Heart right ventricle (tissue), 16 donors: ENCODE measurements at regions of chr10 and their contacts with region 1.

Region 1: GRCh38 chr10:57917019-57917418 is 350.7 kb downstream of the IPMK start:
- DNase-seq: no peak
- ATAC-seq: no peak
- H3K4me3 ChIP-seq: no peak overlapping the region
- H3K27ac ChIP-seq: no peak overlapping the region
- H3K4me1 ChIP-seq: no peaks in the 10 kb centered on the region
- H3K27me3 ChIP-seq: no peaks in the 10 kb centered on the region
- CTCF ChIP-seq: no peak

Region 2: GRCh38 chr10:57791546-57791945 is 125.5 kb before region 1 on chr10:
- intact Hi-C with region 1: no loop called
- DNase-seq: no peak
- ATAC-seq: no peak
- H3K4me3 ChIP-seq: no peak overlapping the region
- H3K27ac ChIP-seq: no peak overlapping the region
- H3K4me1 ChIP-seq: no peaks in the 10 kb centered on the region
- H3K27me3 ChIP-seq: no peaks in the 10 kb centered on the region
- CTCF ChIP-seq: no peak

Region 3: GRCh38 chr10:57979466-57979865 is 62.4 kb after region 1 on chr10:
- intact Hi-C with region 1: loop called in 1 of 10 experiments (anchors 10 kb)
- DNase-seq: no peak
- ATAC-seq: no peak
- H3K4me3 ChIP-seq: no peak overlapping the region
- H3K27ac ChIP-seq: no peak overlapping the region
- H3K4me1 ChIP-seq: no peaks in the 10 kb centered on the region
- H3K27me3 ChIP-seq: no peaks in the 10 kb centered on the region
- CTCF ChIP-seq: no peak